Mammary epithelial cell (primary cell): ENCODE measurements at regions of chr3 and their contacts with region 1.

Region 1: DNA sequence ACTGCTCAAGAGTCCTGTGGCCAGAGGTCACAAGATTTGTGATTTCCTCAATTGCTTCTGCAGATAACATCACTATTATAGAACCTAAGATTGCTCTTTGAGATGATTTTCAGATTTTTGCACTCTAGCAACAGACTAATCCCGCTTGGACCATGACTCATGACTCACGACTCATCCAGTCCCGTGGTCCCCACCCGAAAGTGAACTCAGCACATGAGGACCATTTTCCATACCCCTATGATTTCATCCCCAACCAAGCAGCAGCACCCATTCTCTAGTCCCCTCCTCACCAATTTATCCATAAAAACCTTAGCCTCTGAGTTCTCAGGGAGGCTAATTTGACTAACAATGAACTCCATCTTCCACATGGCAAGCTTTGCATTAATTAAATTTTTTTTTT is 106.3 kb upstream of the ALCAM start:
- DNase-seq: peak; percentile 3
- H3K4me3 ChIP-seq: no peak overlapping the region
- H3K27ac ChIP-seq: no peak overlapping the region
- H3K4me1 ChIP-seq: no peaks in the 10 kb centered on the region
- H3K27me3 ChIP-seq: no peaks in the 10 kb centered on the region
- CTCF ChIP-seq: no peak

Region 2: DNA sequence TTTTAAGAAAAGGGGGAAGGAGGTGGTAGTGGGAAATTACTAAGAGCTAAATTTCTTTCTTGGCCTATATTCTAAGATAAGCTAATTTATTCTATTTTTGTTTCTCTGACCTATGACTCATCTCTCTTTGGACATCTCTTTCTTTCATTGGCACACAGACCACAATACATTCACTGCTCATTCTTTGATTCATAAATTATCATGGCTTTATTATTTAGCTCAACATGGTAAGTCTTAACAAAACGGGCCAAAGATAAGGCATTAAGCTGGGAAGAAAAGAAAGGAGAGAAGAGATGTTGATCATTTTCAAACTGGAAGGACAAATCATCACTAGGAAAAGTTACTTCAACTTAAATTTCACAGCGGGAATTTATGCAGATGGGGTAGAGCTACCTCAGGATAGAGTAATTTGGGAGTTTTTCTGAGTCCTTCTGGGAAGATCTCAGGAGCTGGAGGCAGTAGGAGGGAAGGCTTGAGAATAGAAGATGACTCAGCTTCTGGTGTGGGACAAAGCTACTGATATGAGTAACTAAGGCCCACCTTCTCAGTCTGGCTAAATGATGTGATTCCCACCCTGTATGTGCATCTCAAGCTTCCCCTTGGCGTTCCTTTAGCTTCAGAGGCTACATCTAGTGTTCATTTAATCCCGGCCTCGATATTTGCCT is 98.8 kb after region 1 on chr3:
- CTCF ChIA-PET with region 1: no interaction called
- dilution Hi-C with region 1: loop called (anchors 5 kb)
- in situ Hi-C with region 1: no loop called
- intact Hi-C with region 1: no loop called
- DNase-seq: peak; percentile 59
- H3K4me3 ChIP-seq: no peak overlapping the region
- H3K27ac ChIP-seq: no peak overlapping the region
- H3K4me1 ChIP-seq: peaks cover 41% of the 10 kb centered on the region
- H3K27me3 ChIP-seq: no peaks in the 10 kb centered on the region
- CTCF ChIP-seq: no peak